Natural killer cell (primary cell): ENCODE measurements at regions of chr3 and their contacts with region 1.

Region 1: GRCh38 chr3:16904423-16905417 is 20.0 kb downstream of the PLCL2 start:
- DNase-seq: peak in 1 of 2 donors; percentile 74
- ATAC-seq: peak; percentile 62 to 72 (median 71)
- H3K4me3 ChIP-seq: no peak overlapping the region
- H3K4me3 Mint-ChIP-seq: peak overlapping the region; percentile 83
- H3K27ac ChIP-seq: peak overlapping the region; percentile 51
- H3K27ac Mint-ChIP-seq: peak overlapping the region; percentile 82 to 94
- H3K4me1 ChIP-seq: peaks cover 58% of the 10 kb centered on the region
- H3K4me1 Mint-ChIP-seq: peaks cover 87 to 89% of the 10 kb centered on the region in 2 donors
- H3K27me3 ChIP-seq: no peaks in the 10 kb centered on the region
- H3K27me3 Mint-ChIP-seq: no peaks in the 10 kb centered on the region
- CTCF ChIP-seq: no peak

Region 2: DNA sequence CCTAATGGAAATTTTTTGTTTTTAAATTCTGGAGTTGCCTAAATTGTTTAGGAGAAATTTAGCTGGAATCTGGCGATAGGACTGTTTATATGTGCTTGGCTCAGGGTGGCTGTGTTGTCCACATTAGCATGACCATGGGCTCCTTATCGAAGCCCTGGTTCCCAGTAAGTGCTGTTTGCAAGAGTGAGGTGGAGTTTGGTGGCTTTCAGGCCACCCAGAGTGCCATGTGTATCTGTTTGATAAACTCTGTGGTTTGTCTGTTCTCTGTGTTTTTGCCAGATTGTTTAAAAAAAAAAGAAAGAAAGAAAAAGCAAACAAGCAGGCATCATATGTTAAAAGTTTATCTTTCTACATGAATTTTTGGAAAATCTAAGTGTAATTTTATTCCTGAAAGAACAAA is 31.5 kb after region 1 on chr3:
- intact Hi-C with region 1: loop called (anchors 5 kb)
- DNase-seq: peak in 1 of 2 donors; percentile 59
- ATAC-seq: peak; percentile 46 to 72 (median 60)
- H3K4me3 ChIP-seq: no peak overlapping the region
- H3K4me3 Mint-ChIP-seq: peak overlapping the region; percentile 85
- H3K27ac ChIP-seq: no peak overlapping the region
- H3K27ac Mint-ChIP-seq: peak overlapping the region; percentile 63 to 80
- H3K4me1 ChIP-seq: peaks cover 39% of the 10 kb centered on the region
- H3K4me1 Mint-ChIP-seq: peaks cover 88 to 96% of the 10 kb centered on the region in 2 donors
- H3K27me3 ChIP-seq: no peaks in the 10 kb centered on the region
- H3K27me3 Mint-ChIP-seq: no peaks in the 10 kb centered on the region
- CTCF ChIP-seq: no peak

Region 3: GRCh38 chr3:17032407-17033034 is 127.8 kb after region 1 on chr3:
- intact Hi-C with region 1: loop called (anchors 5 kb)
- DNase-seq: peak in 1 of 2 donors; percentile 25
- ATAC-seq: no peak
- H3K4me3 ChIP-seq: no peak overlapping the region
- H3K4me3 Mint-ChIP-seq: peak overlapping the region; percentile 47
- H3K27ac ChIP-seq: no peak overlapping the region
- H3K27ac Mint-ChIP-seq: peak overlapping the region; percentile 67 to 76
- H3K4me1 ChIP-seq: peaks cover 23% of the 10 kb centered on the region
- H3K4me1 Mint-ChIP-seq: peaks cover 68 to 76% of the 10 kb centered on the region in 2 donors
- H3K27me3 ChIP-seq: no peaks in the 10 kb centered on the region
- H3K27me3 Mint-ChIP-seq: no peaks in the 10 kb centered on the region
- CTCF ChIP-seq: peak; percentile 23

Region 4: GRCh38 chr3:17088602-17089313 is 184.0 kb after region 1 on chr3:
- intact Hi-C with region 1: loop called (anchors 5 kb)
- DNase-seq: peak; percentile 57 to 72
- ATAC-seq: peak; percentile 75 to 89 (median 77)
- H3K4me3 ChIP-seq: no peak overlapping the region
- H3K4me3 Mint-ChIP-seq: peak overlapping the region; percentile 87
- H3K27ac ChIP-seq: peak overlapping the region; percentile 4
- H3K27ac Mint-ChIP-seq: peak overlapping the region; percentile 65 to 80
- H3K4me1 ChIP-seq: peaks cover 25% of the 10 kb centered on the region
- H3K4me1 Mint-ChIP-seq: peaks cover 58 to 62% of the 10 kb centered on the region in 2 donors
- H3K27me3 ChIP-seq: no peaks in the 10 kb centered on the region
- H3K27me3 Mint-ChIP-seq: no peaks in the 10 kb centered on the region
- CTCF ChIP-seq: no peak